Endothelial cell of umbilical vein (primary cell): ENCODE measurements at regions of chr7 and their contacts with region 1.

Region 1: DNA sequence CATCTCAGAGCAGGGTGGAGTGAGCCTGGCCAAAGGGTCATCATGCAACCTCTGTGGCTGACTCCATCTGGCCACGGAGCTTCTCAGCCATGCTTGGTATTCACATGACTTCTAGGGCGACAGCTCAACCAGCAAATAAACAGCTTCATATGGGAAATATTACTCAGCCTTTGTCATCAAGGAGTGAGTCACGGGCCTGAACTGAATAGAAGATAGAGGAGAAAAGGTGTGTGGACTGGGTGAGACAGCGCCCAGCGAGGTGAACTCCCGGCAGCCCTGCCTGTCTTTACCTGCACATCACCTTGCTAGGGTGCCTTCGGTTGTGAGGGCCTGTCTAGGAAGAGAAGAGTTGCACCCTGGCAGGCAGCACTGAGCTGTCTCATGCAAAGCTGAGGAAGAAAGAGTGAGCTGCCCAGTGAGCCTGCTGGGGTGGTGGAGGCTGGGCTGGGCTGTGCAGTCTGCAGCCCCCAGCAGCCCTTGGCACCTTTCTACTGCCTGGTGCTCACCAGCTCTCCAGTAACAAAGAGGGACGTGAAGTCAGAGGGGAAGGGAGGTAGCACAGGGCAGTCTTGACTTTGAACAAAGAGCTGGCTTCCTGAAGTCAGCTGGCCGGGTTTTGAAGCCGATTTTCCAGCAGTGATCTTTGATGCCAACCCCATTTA is 114.2 kb downstream of the EGFR start:
- DNase-seq: peak; percentile 95
- H3K4me3 ChIP-seq: no peak overlapping the region
- H3K27ac ChIP-seq: peak overlapping the region; percentile 97
- H3K4me1 ChIP-seq: peaks cover 42% of the 10 kb centered on the region
- H3K27me3 ChIP-seq: no peaks in the 10 kb centered on the region
- CTCF ChIP-seq: no peak
- POLR2A ChIP-seq: no peak

Region 2: GRCh38 chr7:54811041-54811845 is 321.8 kb before region 1 on chr7:
- CTCF ChIA-PET with region 1: no interaction called
- POLR2A ChIA-PET with region 1: no interaction called
- dilution Hi-C with region 1: no loop called
- intact Hi-C with region 1: loop called (anchors 2 kb)
- DNase-seq: peak; percentile 78
- H3K4me3 ChIP-seq: peak overlapping the region in 1 of 3 experiments; percentile 12
- H3K27ac ChIP-seq: no peak overlapping the region
- H3K4me1 ChIP-seq: peaks cover 22% of the 10 kb centered on the region
- H3K27me3 ChIP-seq: peaks cover 12 to 14% of the 10 kb centered on the region in 2 experiments
- CTCF ChIP-seq: no peak
- POLR2A ChIP-seq: no peak

Region 3: GRCh38 chr7:54995631-54996340 is 137.2 kb before region 1 on chr7:
- CTCF ChIA-PET with region 1: no interaction called
- POLR2A ChIA-PET with region 1: no interaction called
- dilution Hi-C with region 1: no loop called
- intact Hi-C with region 1: loop called (anchors 1 kb)
- DNase-seq: peak; percentile 80
- H3K4me3 ChIP-seq: no peak overlapping the region
- H3K27ac ChIP-seq: peak overlapping the region; percentile 15
- H3K4me1 ChIP-seq: peaks cover 20% of the 10 kb centered on the region
- H3K27me3 ChIP-seq: peaks cover 4% of the 10 kb centered on the region in 2 experiments
- CTCF ChIP-seq: no peak
- POLR2A ChIP-seq: peak; percentile 52

Region 4: DNA sequence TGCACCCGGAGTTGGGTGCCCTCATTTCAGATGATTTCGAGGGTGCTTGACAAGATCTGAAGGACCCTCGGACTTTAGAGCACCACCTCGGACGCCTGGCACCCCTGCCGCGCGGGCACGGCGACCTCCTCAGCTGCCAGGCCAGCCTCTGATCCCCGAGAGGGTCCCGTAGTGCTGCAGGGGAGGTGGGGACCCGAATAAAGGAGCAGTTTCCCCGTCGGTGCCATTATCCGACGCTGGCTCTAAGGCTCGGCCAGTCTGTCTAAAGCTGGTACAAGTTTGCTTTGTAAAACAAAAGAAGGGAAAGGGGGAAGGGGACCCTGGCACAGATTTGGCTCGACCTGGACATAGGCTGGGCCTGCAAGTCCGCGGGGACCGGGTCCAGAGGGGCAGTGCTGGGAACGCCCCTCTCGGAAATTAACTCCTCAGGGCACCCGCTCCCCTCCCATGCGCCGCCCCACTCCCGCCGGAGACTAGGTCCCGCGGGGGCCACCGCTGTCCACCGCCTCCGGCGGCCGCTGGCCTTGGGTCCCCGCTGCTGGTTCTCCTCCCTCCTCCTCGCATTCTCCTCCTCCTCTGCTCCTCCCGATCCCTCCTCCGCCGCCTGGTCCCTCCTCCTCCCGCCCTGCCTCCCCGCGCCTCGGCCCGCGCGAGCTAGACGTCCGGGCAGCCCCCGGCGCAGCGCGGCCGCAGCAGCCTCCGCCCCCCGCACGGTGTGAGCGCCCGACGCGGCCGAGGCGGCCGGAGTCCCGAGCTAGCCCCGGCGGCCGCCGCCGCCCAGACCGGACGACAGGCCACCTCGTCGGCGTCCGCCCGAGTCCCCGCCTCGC is 114.4 kb before region 1 on chr7 and contains the start of gene EGFR:
- CTCF ChIA-PET with region 1: interaction called, 4 read pairs
- POLR2A ChIA-PET with region 1: no interaction called
- dilution Hi-C with region 1: no loop called
- intact Hi-C with region 1: loop called (anchors 2 kb)
- DNase-seq: peak; percentile 64
- H3K4me3 ChIP-seq: peak within 1 kb of the TSS; percentile 69 to 84 (median 74)
- H3K27ac ChIP-seq: peak within 1 kb of the TSS; percentile 40
- H3K4me1 ChIP-seq: peaks cover 10% of the 10 kb centered on the region
- H3K27me3 ChIP-seq: peaks cover 17 to 29% of the 10 kb centered on the region in 2 experiments
- CTCF ChIP-seq: no peak
- POLR2A ChIP-seq: no peak
- total RNA-seq, gene EGFR: 4.1 and 5.0 TPM in 2 replicates

Region 5: DNA sequence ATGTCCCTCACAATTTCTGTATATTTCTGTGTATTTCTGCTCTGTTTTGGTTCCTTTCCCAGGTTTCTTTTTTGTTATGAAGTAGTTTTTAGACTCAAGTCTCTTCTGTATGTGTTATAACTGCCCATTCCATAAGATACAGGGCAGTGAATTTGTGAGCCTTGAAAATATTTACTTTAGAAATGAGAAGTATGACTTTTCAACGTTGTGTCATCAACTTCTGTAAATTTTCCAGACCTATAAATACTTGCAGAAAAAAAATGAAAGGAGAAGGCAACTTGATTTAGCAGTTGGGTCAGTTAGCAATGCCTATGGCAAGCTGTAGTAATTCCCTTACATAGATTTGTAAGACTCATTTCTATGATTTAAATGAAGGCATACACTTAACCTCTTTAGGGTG is 102.7 kb before region 1 on chr7:
- CTCF ChIA-PET with region 1: no interaction called
- POLR2A ChIA-PET with region 1: no interaction called
- dilution Hi-C with region 1: no loop called
- intact Hi-C with region 1: no loop called
- DNase-seq: no peak
- H3K4me3 ChIP-seq: no peak overlapping the region
- H3K27ac ChIP-seq: no peak overlapping the region
- H3K4me1 ChIP-seq: no peaks in the 10 kb centered on the region
- H3K27me3 ChIP-seq: no peaks in the 10 kb centered on the region
- CTCF ChIP-seq: no peak
- POLR2A ChIP-seq: no peak

Region 6: GRCh38 chr7:55065079-55065478 is 67.9 kb before region 1 on chr7:
- CTCF ChIA-PET with region 1: interaction called, 7 read pairs
- POLR2A ChIA-PET with region 1: interaction called, 5 read pairs
- dilution Hi-C with region 1: no loop called
- intact Hi-C with region 1: loop called (anchors 1 kb)
- DNase-seq: peak; percentile 83
- H3K4me3 ChIP-seq: no peak overlapping the region
- H3K27ac ChIP-seq: peak overlapping the region; percentile 95
- H3K4me1 ChIP-seq: peaks cover 19% of the 10 kb centered on the region
- H3K27me3 ChIP-seq: no peaks in the 10 kb centered on the region
- CTCF ChIP-seq: no peak
- POLR2A ChIP-seq: no peak

Region 7: GRCh38 chr7:55086413-55087201 is 46.4 kb before region 1 on chr7:
- CTCF ChIA-PET with region 1: interaction called, 6 read pairs
- POLR2A ChIA-PET with region 1: no interaction called
- dilution Hi-C with region 1: no loop called
- intact Hi-C with region 1: loop called (anchors 2 kb)
- DNase-seq: peak; percentile 64
- H3K4me3 ChIP-seq: no peak overlapping the region
- H3K27ac ChIP-seq: no peak overlapping the region
- H3K4me1 ChIP-seq: peaks cover 16% of the 10 kb centered on the region
- H3K27me3 ChIP-seq: peaks cover 44 to 58% of the 10 kb centered on the region in 2 experiments
- CTCF ChIP-seq: no peak
- POLR2A ChIP-seq: no peak

Region 8: DNA sequence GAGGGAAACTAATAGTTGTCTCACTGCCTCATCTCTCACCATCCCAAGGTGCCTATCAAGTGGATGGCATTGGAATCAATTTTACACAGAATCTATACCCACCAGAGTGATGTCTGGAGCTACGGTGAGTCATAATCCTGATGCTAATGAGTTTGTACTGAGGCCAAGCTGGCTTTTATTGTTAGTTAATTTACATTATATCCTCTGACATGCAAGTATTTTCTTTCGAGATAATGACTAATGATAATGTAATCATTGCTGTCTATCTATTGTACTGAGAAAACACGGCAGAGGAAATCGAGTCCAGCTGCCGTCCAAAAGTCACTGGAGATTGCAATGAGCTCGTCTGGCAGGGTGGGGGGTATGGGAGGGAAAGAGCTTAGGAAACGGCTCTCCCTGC is 59.7 kb after region 1 on chr7:
- CTCF ChIA-PET with region 1: interaction called, 8 read pairs
- POLR2A ChIA-PET with region 1: interaction called, 6 read pairs
- dilution Hi-C with region 1: no loop called
- intact Hi-C with region 1: loop called (anchors 1 kb)
- DNase-seq: peak; percentile 90
- H3K4me3 ChIP-seq: no peak overlapping the region
- H3K27ac ChIP-seq: peak overlapping the region; percentile 80
- H3K4me1 ChIP-seq: peaks cover 42% of the 10 kb centered on the region
- H3K27me3 ChIP-seq: no peaks in the 10 kb centered on the region
- CTCF ChIP-seq: no peak
- POLR2A ChIP-seq: peak; percentile 45